Aorta (tissue), 5 donors: ENCODE measurements at regions of chr11 and their contacts with region 1.

Region 1: GRCh38 chr11:65095974-65096806 is at the start of gene VPS51:
- DNase-seq: peak; percentile 93
- ATAC-seq: peak; percentile 96
- H3K4me3 ChIP-seq: peak within 1 kb of the TSS; percentile 78 to 98
- H3K27ac ChIP-seq: peak within 1 kb of the TSS; percentile 41 to 80
- H3K4me1 ChIP-seq: no peaks in the 10 kb centered on the region
- H3K27me3 ChIP-seq: no peaks in the 10 kb centered on the region
- total RNA-seq, gene VPS51: 101 to 121 TPM

Region 2: DNA sequence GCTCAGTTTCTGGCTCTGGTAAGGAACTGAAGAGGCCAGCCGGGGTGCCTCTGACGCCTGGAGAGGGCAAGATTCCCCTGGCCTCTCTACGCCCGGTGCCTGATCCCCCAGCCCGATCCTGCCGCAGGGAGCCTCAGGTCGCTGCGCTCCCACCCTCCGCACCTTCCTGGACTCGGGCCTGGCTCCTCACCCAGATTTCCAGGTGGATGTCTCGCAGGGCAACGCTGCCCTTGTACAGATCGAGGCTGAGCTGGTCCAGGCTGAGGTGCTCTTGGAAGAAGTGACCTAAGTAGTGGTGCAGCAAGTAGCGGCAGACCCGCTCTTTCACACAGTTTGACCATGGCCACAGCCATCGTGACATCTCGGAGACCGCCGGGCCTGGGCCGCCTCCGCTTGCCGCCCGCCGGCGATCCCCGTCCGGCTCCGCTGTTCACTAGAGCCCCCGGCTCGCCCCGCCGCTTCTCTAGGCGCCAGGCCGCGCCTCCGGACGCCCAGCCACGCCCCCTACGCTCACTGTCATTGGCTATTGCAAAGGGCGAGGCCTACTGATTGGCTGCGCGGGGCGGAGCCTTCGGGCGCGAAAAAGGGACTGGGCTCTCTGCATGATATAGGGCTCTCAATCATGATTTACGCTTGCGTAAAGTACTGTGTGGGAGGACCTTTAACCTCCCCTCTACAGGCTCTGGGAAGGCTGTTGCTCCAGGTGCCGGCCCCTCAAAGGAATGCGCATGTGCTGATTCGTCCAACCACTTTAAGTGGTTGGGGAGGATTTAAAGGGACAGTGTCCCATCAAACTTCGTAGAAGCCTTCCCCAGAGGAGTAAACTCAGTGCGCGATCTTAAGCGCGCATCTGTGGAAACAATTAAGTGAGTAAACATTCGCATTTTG is 179.2 kb before region 1 on chr11 and contains the start of gene ATG2A:
- intact Hi-C with region 1: no loop called
- DNase-seq: peak; percentile 99 to 100
- ATAC-seq: peak; percentile 97
- H3K4me3 ChIP-seq: peak within 1 kb of the TSS; percentile 69 to 74
- H3K27ac ChIP-seq: peak within 1 kb of the TSS in 1 of 2 donors; percentile 14
- H3K4me1 ChIP-seq: no peaks in the 10 kb centered on the region
- H3K27me3 ChIP-seq: no peaks in the 10 kb centered on the region
- total RNA-seq, gene ATG2A: 19.6 to 20.6 TPM

Region 3: GRCh38 chr11:65040847-65041621 is 55.2 kb before region 1 on chr11 and contains the start of gene SAC3D1:
- intact Hi-C with region 1: loop called in 1 of 2 experiments (anchors 5 kb)
- DNase-seq: peak; percentile 94 to 95
- ATAC-seq: peak; percentile 96
- H3K4me3 ChIP-seq: peak within 1 kb of the TSS; percentile 53 to 62
- H3K27ac ChIP-seq: peak within 1 kb of the TSS in 1 of 2 donors; percentile 90
- H3K4me1 ChIP-seq: no peaks in the 10 kb centered on the region
- H3K27me3 ChIP-seq: no peaks in the 10 kb centered on the region
- total RNA-seq, gene SAC3D1: 3.6 to 4.9 TPM

Region 4: GRCh38 chr11:65194564-65194963 is 98.4 kb after region 1 on chr11:
- intact Hi-C with region 1: no loop called
- DNase-seq: no peak
- ATAC-seq: no peak
- H3K4me3 ChIP-seq: no peak overlapping the region
- H3K27ac ChIP-seq: no peak overlapping the region
- H3K4me1 ChIP-seq: no peaks in the 10 kb centered on the region
- H3K27me3 ChIP-seq: no peaks in the 10 kb centered on the region